SK-N-SH (cell line): ENCODE measurements at regions of chr22 and their contacts with region 1.

Region 1: DNA sequence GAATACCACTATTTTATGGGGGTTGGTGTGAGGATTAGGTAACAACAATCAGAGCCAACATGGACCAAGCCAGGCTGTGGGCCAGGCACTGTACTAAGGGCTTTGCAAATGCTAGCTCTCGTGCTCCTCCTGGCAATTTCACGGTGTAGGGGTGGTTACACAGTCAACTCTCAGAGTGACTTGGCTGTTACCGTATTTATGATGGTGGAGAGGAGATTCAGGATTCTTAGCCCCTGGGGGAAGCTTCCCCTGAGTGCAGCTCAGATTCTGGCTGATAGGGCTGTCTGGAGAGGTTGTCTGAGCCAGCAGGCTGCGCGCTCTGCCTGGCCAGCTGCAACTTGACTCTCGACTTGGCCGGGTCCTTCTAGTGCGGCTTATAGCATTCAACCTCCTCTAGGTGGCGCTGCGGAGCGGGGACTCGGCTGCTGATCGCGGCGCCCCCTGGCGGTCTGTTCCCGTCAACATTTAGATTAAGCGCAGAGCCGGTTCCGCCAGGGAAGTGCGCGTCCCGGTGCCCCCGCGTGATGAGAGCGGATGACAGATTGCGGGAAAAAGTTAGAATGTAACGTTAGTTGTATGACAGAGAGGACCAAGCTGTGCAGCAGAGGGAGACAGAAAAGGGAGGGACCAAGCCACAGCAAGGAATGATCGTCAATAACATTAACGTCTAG is 4.5 kb upstream of the NCF4 start:
- DNase-seq: peak; percentile 89
- H3K4me3 ChIP-seq: peak overlapping the region in 1 of 2 experiments; percentile 54; a peak in 1 of 4 replicates
- H3K27ac ChIP-seq: peak overlapping the region in 1 of 2 experiments; percentile 41; a peak in 1 of 4 replicates
- H3K4me1 ChIP-seq: peaks cover 0 to 9% of the 10 kb centered on the region in 2 experiments; a peak in 1 of 4 replicates
- H3K27me3 ChIP-seq: peaks cover 11% of the 10 kb centered on the region
- CTCF ChIP-seq: peak; percentile 100
- EP300 ChIP-seq: no peak; a peak in 1 of 4 replicates
- RAD21 ChIP-seq: peak; percentile 80

Region 2: DNA sequence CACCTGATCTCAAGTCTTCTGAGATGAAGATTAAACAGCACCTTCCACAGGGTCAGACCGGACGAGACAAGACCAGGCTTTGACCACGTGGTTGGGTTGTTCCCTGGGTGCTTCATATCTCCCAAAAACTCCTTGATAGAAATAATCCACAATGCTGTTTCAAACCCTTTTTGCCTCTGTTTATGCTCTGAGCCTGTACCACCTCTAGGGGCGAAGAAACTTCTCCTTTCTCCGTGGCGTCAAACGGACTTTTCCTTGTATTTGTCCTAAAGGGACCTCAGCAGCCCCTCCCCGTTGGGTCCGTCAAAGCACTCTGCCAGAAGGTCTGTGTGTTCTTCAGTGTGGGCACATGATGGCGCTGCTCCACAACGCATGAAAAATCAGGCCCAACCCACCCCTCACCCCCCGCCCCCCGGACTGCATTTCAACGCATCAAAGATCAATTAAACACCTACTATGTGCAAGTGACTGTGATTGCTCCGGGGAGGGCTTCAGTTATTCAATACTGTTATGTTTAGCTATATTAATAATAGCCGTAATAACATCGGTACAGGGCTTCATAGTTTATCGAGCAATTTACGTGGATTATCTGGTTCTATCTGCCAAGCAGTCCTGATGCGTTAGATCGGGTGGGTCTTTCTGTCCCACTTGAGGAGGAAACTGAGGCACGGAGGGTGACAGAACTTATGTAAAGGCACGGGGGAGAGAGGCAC is 310.0 kb before region 1 on chr22:
- CTCF ChIA-PET with region 1: interaction called, 61 read pairs
- POLR2A ChIA-PET with region 1: interaction called, 3 read pairs
- DNase-seq: peak; percentile 86
- H3K4me3 ChIP-seq: no peak overlapping the region
- H3K27ac ChIP-seq: no peak overlapping the region
- H3K4me1 ChIP-seq: peaks cover 2% of the 10 kb centered on the region in 2 experiments; a peak in 1 of 4 replicates
- H3K27me3 ChIP-seq: peaks cover 9% of the 10 kb centered on the region
- CTCF ChIP-seq: peak; percentile 65
- EP300 ChIP-seq: no peak
- RAD21 ChIP-seq: peak; percentile 84

Region 3: DNA sequence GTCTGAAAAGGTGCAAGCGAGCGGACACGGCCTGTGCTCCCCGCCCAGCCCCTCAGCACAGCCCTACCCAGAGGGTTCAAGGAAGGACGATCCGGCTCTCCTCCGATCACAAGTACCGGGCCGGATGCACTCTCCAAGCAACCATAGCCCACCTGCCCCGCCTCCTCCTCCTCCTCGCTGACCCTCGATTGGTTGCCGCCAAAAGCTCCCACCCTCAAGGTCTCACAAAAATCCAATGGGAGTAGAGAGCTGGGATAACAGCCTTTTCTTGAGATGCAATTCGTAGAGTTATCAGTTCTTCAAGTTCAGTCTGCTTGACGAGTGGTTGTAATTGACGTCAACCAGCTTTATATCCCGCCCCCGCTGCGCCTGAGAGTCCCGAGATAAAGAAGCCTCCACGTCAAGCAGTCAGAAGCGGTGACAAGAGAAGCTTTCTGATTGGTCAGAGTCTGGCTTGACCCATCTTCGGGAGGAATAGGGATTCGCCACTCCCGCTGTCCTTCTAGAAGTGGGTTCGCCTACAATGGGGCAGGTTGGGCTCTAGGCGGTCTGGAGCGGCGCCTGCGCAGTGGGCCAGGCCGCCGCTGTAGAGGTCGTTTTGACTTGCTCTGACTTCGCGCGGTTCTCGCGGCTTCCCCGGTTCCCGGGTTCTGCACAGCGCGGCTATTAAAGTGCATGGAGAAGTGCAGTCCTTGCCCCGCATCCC is 80.1 kb before region 1 on chr22 and contains the start of gene IFT27:
- CTCF ChIA-PET with region 1: interaction called, 159 read pairs
- POLR2A ChIA-PET with region 1: interaction called, 4 read pairs
- DNase-seq: peak; percentile 99
- H3K4me3 ChIP-seq: peak within 1 kb of the TSS; percentile 84 to 86
- H3K27ac ChIP-seq: peak within 1 kb of the TSS in 1 of 2 experiments; percentile 76; a peak in 2 of 4 replicates
- H3K4me1 ChIP-seq: peaks cover 0 to 10% of the 10 kb centered on the region in 2 experiments; a peak in 3 of 4 replicates
- H3K27me3 ChIP-seq: no peaks in the 10 kb centered on the region
- CTCF ChIP-seq: no peak
- EP300 ChIP-seq: no peak
- RAD21 ChIP-seq: no peak
- polyA plus RNA-seq, gene IFT27: 29.4 and 31.5 TPM in 2 replicates

Region 4: GRCh38 chr22:36808761-36809224 is 47.5 kb before region 1 on chr22:
- CTCF ChIA-PET with region 1: interaction called, 36 read pairs
- POLR2A ChIA-PET with region 1: no interaction called
- DNase-seq: no peak
- H3K4me3 ChIP-seq: no peak overlapping the region
- H3K27ac ChIP-seq: no peak overlapping the region
- H3K4me1 ChIP-seq: no peaks in the 10 kb centered on the region
- H3K27me3 ChIP-seq: peaks cover 48% of the 10 kb centered on the region
- CTCF ChIP-seq: no peak
- EP300 ChIP-seq: no peak
- RAD21 ChIP-seq: no peak

Region 5: DNA sequence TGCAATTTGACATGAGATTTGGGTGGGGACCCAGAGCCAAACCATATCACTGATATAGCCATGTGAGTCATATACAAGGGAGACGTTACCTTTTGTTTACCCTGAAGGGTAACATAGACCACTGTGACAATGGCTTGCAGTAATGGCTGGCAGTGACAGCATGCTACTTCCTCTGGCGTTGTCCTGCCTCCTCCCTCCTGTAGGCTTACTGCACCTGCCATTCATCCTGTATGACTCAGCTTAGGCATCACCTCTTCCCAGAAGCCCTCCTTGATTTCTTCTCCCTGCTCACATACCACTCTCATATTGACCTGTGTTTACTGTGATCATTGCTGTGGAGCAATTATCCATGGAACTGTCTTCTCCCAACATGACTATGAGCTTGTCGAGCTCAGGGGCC is 27.4 kb before region 1 on chr22:
- CTCF ChIA-PET with region 1: interaction called, 21 read pairs
- POLR2A ChIA-PET with region 1: no interaction called
- DNase-seq: no peak
- H3K4me3 ChIP-seq: no peak overlapping the region
- H3K27ac ChIP-seq: no peak overlapping the region
- H3K4me1 ChIP-seq: no peaks in the 10 kb centered on the region
- H3K27me3 ChIP-seq: peaks cover 5% of the 10 kb centered on the region; the same call in 1 of the 2 replicates
- CTCF ChIP-seq: no peak
- EP300 ChIP-seq: no peak
- RAD21 ChIP-seq: no peak

Region 6: DNA sequence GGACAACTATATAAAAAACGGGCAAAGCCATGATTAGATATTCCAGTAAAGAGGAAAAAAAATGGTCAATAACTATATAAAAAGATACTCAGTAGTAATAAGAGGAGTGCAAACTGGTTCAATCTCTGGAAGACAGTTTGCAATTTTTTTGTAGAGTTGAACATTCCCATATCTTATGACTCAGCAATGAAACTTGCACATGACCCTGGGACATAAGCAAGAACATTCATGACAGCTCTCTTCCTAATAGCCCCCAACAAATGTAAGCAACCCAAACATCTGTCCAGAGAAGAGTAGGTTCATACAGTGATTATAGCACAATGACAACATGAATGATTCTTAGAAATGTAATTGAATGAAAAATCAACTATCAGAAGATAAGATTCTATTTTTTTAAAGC is 35.4 kb after region 1 on chr22:
- CTCF ChIA-PET with region 1: interaction called, 23 read pairs
- POLR2A ChIA-PET with region 1: no interaction called
- DNase-seq: no peak
- H3K4me3 ChIP-seq: no peak overlapping the region
- H3K27ac ChIP-seq: no peak overlapping the region
- H3K4me1 ChIP-seq: no peaks in the 10 kb centered on the region
- H3K27me3 ChIP-seq: no peaks in the 10 kb centered on the region; the same call in 1 of the 2 replicates
- CTCF ChIP-seq: no peak
- EP300 ChIP-seq: no peak
- RAD21 ChIP-seq: no peak

Region 7: GRCh38 chr22:36991206-36991605 is 134.9 kb after region 1 on chr22:
- CTCF ChIA-PET with region 1: interaction called, 12 read pairs
- POLR2A ChIA-PET with region 1: no interaction called
- DNase-seq: no peak
- H3K4me3 ChIP-seq: no peak overlapping the region
- H3K27ac ChIP-seq: no peak overlapping the region
- H3K4me1 ChIP-seq: no peaks in the 10 kb centered on the region
- H3K27me3 ChIP-seq: peaks cover 25% of the 10 kb centered on the region; the same call in 1 of the 2 replicates
- CTCF ChIP-seq: no peak
- EP300 ChIP-seq: no peak
- RAD21 ChIP-seq: no peak